H1 (cell line): ENCODE measurements at regions of chr2 and their contacts with region 1.

Region 1: GRCh38 chr2:118527571-118527970 is 319.9 kb downstream of the EN1 start:
- DNase-seq: no peak
- H3K4me3 ChIP-seq: no peak overlapping the region
- H3K27ac ChIP-seq: no peak overlapping the region
- H3K4me1 ChIP-seq: peaks cover 5 to 22% (median 13%) of the 10 kb centered on the region in 4 experiments; a peak in 5 of 7 replicates
- H3K27me3 ChIP-seq: 0 out of 7 replicates have a peak, but pooled peaks cover 0 to 2% (median 0%) of the 10 kb centered on the region in 4 experiments
- CTCF ChIP-seq: no peak
- EP300 ChIP-seq: no peak
- POLR2A ChIP-seq: no peak
- RAD21 ChIP-seq: no peak

Region 2: GRCh38 chr2:118539290-118539689 is 11.7 kb after region 1 on chr2:
- CTCF ChIA-PET with region 1: interaction called, 28 read pairs
- POLR2A ChIA-PET with region 1: interaction called, 3 read pairs
- DNase-seq: peak; percentile 10 to 56
- H3K4me3 ChIP-seq: no peak overlapping the region
- H3K27ac ChIP-seq: no peak overlapping the region
- H3K4me1 ChIP-seq: no peaks in the 10 kb centered on the region
- H3K27me3 ChIP-seq: no peaks in the 10 kb centered on the region
- CTCF ChIP-seq: peak; percentile 52 to 67 (median 53)
- EP300 ChIP-seq: no peak
- POLR2A ChIP-seq: no peak
- RAD21 ChIP-seq: peak; percentile 30 to 64; a peak in 3 of 4 replicates